Heart left ventricle (tissue), 16 donors: ENCODE measurements at regions of chr4 and their contacts with region 1.

Region 1: DNA sequence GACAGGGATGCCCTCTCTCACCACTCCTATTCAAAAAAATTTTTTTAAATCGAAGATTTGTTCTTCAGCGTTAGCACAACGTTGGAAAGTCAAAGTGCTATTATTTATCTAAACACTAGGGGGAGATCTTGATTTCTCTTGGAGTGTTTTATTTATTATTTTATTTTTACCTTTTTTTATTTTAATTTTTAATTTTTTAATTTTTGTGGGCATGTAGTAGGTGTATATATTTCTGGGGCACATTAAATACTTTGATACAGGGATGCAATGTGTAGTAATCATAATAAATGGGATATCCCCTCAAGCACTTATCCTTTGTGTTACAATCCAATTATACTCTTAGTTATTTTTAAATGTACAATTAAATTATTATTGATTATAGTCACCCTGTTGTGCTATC is 37.4 kb upstream of the SLC10A4 start:
- DNase-seq: no peak
- ATAC-seq: no peak
- H3K4me3 ChIP-seq: no peak overlapping the region
- H3K27ac ChIP-seq: no peak overlapping the region
- H3K4me1 ChIP-seq: peaks cover 0 to 4% (median 0%) of the 10 kb centered on the region in 12 donors
- H3K27me3 ChIP-seq: no peaks in the 10 kb centered on the region
- CTCF ChIP-seq: peak; percentile 45 to 73 (median 62)
- POLR2A ChIP-seq: no peak

Region 2: GRCh38 chr4:48296365-48296764 is 149.3 kb before region 1 on chr4:
- intact Hi-C with region 1: no loop called
- DNase-seq: no peak
- ATAC-seq: no peak
- H3K4me3 ChIP-seq: no peak overlapping the region
- H3K27ac ChIP-seq: no peak overlapping the region
- H3K4me1 ChIP-seq: no peaks in the 10 kb centered on the region
- H3K27me3 ChIP-seq: no peaks in the 10 kb centered on the region
- CTCF ChIP-seq: no peak
- POLR2A ChIP-seq: no peak

Region 3: DNA sequence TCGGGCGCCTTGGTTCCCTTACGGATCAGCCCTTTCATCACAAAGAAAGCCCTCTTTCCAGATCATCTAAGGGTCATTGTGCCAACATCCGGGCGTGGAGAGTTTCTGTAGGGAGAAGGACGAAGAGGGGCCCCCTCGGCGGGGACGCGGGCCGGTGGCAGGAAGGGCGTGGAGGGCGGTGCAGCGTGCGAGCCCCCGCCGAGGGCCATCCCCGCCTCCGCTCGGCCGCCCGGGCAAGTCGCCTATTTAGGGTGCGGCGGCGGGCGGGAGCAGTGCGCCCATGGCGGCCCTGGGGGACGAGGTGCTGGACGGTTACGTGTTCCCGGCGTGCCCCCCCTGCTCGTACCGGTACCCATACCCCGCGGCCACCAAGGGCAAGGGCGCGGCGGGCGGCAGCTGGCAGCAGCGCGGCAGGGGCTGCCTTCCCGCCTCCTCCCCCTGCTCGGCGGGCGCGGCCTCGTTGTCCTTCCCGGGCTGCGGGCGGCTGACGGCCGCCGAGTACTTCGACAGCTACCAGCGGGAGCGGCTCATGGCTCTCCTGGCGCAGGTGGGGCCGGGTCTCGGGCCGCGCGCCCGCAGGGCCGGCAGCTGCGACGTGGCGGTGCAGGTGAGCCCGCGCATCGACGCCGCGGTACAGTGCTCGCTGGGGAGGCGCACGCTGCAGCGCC is 44.4 kb after region 1 on chr4 and contains the start of gene ZAR1:
- intact Hi-C with region 1: loop called in 2 of 10 experiments (anchors 10 kb)
- DNase-seq: peak in 1 of 5 donors; percentile 60
- ATAC-seq: peak in 2 of 4 donors; percentile 51 to 66
- H3K4me3 ChIP-seq: peak within 1 kb of the TSS; percentile 1 to 52 (median 44)
- H3K27ac ChIP-seq: no peak within 1 kb of the TSS
- H3K4me1 ChIP-seq: peaks cover 0 to 17% (median 2%) of the 10 kb centered on the region in 12 donors
- H3K27me3 ChIP-seq: peaks cover 17 to 71% (median 47%) of the 10 kb centered on the region in 9 donors
- CTCF ChIP-seq: no peak
- POLR2A ChIP-seq: no peak
- total RNA-seq, gene ZAR1: not detected

Region 4: DNA sequence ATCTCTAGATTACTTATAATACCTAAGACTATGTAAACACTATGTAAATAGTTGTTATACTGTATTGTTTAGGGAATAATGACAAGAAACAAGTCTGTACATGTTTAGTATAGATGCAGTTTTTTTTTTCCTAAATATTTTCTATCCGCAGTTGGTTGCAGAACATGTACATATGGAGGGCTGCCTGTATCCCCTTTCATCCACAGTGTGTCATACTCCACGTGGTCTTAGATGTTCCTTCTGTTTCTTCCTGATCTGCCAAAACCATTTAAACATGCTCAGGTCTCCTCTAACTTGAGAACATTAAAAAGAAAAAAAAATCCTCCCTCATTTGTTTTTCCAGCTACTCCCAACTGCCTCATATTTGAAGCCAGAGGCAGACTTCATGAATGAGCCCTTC is 399.1 kb after region 1 on chr4:
- intact Hi-C with region 1: no loop called
- DNase-seq: no peak
- ATAC-seq: no peak
- H3K4me3 ChIP-seq: no peak overlapping the region
- H3K27ac ChIP-seq: no peak overlapping the region
- H3K4me1 ChIP-seq: peaks cover 0 to 6% (median 0%) of the 10 kb centered on the region in 12 donors
- H3K27me3 ChIP-seq: no peaks in the 10 kb centered on the region
- CTCF ChIP-seq: no peak
- POLR2A ChIP-seq: no peak